Tibial artery (tissue), 4 donors: ENCODE measurements at regions of chr10 and their contacts with region 1.

Region 1: GRCh38 chr10:31318854-31319601 is at the start of gene ZEB1:
- DNase-seq: peak; percentile 91 to 94
- H3K4me3 ChIP-seq: peak within 1 kb of the TSS; percentile 98 to 99
- H3K27ac ChIP-seq: peak within 1 kb of the TSS; percentile 97 to 98
- H3K4me1 ChIP-seq: peaks cover 0 to 25% (median 6%) of the 10 kb centered on the region in 4 donors
- H3K27me3 ChIP-seq: no peaks in the 10 kb centered on the region
- CTCF ChIP-seq: peak; percentile 50 to 61

Region 2: GRCh38 chr10:29908962-29909361 is 1410.1 kb before region 1 on chr10:
- intact Hi-C with region 1: no loop called
- DNase-seq: no peak
- H3K4me3 ChIP-seq: no peak overlapping the region
- H3K27ac ChIP-seq: no peak overlapping the region
- H3K4me1 ChIP-seq: no peaks in the 10 kb centered on the region
- H3K27me3 ChIP-seq: no peaks in the 10 kb centered on the region
- CTCF ChIP-seq: no peak

Region 3: GRCh38 chr10:31399631-31400030 is 80.6 kb after region 1 on chr10:
- intact Hi-C with region 1: loop called (anchors 5 kb)
- DNase-seq: peak; percentile 40 to 75
- H3K4me3 ChIP-seq: no peak overlapping the region
- H3K27ac ChIP-seq: peak overlapping the region; percentile 45 to 55
- H3K4me1 ChIP-seq: peaks cover 0 to 79% (median 21%) of the 10 kb centered on the region in 4 donors
- H3K27me3 ChIP-seq: no peaks in the 10 kb centered on the region
- CTCF ChIP-seq: no peak

Region 4: DNA sequence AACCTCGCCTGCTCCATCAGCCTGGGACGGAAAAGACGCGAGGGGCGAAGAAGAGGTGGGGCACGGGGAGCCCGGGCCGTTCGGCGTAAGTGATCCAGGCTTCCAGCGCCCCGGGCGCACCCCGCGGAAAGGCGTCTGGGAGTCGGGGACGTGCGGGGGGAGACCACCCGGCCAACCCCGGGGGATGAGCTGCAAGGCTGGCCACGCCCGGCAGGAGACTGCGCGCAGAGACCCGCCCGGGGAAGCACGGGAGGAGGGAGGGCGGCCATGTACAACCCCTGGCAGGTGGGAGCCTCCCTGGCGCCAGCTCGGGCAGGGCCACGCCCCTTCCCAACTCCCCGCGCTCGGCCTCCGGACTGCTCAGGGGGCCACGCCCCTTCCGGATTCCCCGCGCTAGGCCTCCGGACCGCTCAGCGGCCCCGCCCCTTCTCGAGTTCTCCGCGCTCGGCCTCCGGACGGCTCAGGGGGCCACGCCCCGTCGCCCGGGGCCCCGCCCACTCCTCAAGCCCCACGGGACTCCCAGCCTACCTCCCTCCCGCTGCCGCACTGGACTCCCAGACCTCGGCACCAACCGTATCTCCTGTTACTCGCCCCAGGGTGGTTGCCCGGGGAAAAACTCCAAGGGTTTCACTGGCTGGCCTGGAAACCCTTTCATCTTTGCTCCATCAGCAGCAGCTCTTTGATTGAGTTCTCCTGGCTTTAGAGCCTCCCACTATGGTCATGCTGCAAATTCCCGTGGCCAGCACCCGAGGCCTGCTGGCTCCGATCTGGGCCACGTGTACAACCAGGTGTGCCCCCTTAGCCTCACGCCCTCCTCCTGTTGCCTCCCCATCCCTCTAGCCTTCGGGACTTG is 284.4 kb after region 1 on chr10:
- intact Hi-C with region 1: loop called (anchors 10 kb)
- DNase-seq: peak; percentile 95 to 99
- H3K4me3 ChIP-seq: peak overlapping the region; percentile 73 to 78
- H3K27ac ChIP-seq: peak overlapping the region; percentile 83 to 94
- H3K4me1 ChIP-seq: peaks cover 0 to 11% (median 5%) of the 10 kb centered on the region in 4 donors
- H3K27me3 ChIP-seq: no peaks in the 10 kb centered on the region
- CTCF ChIP-seq: peak in 1 of 2 experiments; percentile 36